ENCODE measurements at regions of chr12 and their contacts with region 1.

Region 1: GRCh38 chr12:10190558-10191388 is 11.9 kb downstream of the TMEM52B start:
- DNase-seq: peak; percentile 86
- H3K4me3 ChIP-seq: no peak overlapping the region
- H3K27ac ChIP-seq: no peak overlapping the region
- H3K4me1 ChIP-seq: peaks cover 42% of the 10 kb centered on the region
- CTCF ChIP-seq: peak; percentile 93

Region 2: DNA sequence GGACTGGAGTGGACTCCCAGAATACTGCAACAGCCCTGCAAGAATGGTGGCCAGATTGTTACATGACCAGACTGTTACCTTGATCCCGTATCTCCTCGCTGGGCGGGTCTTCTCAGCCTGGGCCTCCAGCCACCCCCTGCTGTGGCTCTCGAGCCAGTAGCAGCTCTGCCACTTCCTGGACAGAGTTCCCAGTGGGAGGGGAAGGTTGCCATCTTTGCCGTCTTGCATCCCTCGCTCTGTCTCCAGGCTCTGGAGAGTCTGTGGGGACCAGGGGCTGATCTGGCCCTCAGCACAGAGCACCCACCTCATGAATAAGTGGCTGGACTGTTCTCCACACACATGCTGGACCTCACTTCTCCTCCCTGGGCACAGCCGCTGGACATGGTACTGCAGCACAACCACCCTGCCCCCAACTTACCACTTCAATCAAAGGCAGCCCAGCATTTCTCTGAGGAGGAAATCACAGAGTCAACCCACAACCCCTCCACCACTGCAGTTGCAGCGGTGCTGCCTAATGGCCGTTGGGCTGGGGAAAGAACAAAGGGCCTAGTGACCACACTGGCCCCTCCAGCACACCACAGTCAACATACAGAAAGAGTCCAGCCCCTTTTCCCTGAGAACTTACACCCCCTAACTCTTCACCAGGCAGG is 370.4 kb before region 1 on chr12:
- CTCF ChIA-PET with region 1: no interaction called
- POLR2A ChIA-PET with region 1: no interaction called
- intact Hi-C with region 1: no loop called
- DNase-seq: no peak
- H3K4me3 ChIP-seq: no peak overlapping the region
- H3K27ac ChIP-seq: no peak overlapping the region
- H3K4me1 ChIP-seq: no peaks in the 10 kb centered on the region
- CTCF ChIP-seq: no peak

Region 3: DNA sequence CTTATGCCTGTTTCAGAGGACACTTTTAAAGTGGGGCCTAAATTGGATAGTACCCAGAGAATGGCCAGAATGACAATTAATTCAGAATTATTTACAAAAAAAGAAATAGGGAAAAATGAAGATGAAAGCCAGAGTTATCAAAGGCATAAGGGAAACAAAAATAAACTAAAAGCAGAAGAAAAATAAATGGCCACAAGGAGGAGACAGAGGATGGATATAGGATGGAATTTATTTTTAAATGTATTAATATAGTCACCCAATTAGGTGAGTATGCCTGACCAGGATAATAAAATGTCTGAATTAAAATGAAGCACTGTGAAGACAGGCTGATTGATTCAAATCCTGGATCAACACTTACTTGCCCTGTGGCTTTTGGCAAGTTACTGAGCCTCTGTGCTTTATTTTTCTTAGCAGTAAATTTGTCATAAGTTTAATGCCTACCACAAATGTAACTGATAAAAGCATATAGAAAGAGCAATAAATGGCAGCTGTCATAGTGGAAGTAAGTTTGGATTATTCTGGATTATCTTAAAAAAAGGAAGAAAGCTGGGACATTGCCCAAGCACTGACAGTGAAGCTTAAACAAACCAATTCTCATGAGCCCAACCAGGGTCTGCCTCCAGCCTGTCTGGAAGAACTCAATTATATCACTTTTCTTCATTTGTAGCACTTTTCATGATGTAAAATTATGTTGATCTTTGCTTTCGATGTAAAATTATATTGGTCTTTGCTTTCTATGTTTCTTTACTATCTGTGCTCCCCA is 156.8 kb before region 1 on chr12:
- CTCF ChIA-PET with region 1: no interaction called
- POLR2A ChIA-PET with region 1: no interaction called
- intact Hi-C with region 1: loop called (anchors 1 kb)
- DNase-seq: peak; percentile 9
- H3K4me3 ChIP-seq: no peak overlapping the region
- H3K27ac ChIP-seq: no peak overlapping the region
- H3K4me1 ChIP-seq: no peaks in the 10 kb centered on the region
- CTCF ChIP-seq: peak; percentile 81

Region 4: DNA sequence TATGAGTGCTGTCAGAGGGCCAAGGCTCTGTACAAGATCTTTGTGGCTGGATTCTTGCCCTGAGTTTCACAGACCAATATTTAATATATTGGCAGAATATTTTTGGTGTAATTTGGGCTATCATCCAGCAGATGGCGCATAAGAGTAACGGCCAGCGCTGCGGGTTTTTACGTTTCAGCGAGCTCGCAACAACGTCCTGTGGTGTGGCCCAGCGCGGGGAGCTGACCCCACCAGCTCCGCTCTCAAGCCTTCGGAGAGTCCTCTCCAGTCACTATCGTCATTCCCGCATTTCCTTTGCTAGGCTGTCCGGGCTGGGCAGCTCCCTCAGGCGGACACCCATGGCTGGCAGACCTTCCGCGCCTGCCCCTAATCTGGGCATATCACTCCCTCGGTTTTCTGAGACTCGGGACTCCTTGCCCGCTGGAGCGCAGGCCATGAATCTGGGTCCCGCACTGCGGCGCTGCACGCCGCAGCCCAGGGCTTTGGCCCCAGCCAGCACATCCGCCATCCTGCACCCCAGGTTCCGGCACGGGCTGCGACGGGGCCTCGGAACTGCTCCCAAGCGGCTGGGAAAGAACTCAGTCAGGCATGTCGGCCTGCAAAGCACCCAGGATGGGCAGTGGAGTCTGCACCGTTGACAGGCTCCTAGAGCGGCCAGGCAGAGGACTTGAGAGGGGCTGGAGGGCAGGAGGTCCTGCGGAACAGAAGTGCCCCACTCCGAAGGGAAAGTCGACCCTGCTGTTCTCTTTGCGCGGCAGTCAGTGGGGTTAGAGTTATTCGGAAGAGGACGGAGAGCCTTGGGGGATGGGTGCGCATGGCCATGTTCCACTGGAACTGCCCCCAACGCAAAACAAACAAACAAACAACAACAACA is 37.3 kb before region 1 on chr12:
- CTCF ChIA-PET with region 1: interaction called, 5 read pairs
- POLR2A ChIA-PET with region 1: interaction called, 13 read pairs
- intact Hi-C with region 1: loop called (anchors 1 kb)
- DNase-seq: peak; percentile 78
- H3K4me3 ChIP-seq: peak overlapping the region; percentile 70
- H3K27ac ChIP-seq: no peak overlapping the region
- H3K4me1 ChIP-seq: peaks cover 15% of the 10 kb centered on the region
- CTCF ChIP-seq: peak; percentile 95

Region 5: DNA sequence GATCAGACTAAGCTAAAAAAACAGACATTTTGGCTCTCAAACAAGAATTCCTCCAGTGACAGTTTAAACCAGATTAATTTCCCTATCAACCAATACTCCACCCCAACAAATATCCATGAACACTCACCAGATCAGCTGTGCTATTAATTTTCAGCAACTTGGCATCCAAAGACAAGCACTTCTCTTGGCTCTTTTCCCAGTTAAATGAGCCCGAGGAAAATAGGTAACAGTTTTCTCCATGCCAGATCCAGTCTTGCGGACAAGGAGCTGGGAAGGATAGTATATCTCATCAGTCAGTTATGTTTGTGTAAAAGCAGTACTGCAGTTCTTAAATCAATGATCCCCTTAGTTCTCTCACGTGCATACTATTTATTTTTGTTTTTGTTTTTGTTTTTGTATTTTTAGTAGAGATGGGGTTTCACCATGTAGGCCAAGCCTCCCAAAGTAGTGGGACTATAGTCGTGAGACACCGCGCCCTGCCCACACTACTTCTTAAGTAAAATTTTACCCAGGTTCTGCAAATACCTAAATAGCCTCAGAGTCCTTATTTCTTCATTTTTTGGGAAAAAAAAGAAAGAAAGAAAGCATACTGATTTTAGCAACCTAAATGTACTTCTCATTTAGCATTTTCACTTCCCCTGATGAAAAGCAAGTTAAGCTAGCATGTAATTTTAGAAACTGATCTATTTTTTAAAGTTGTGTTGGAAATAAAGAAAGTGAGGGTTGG is 30.0 kb before region 1 on chr12:
- CTCF ChIA-PET with region 1: no interaction called
- POLR2A ChIA-PET with region 1: interaction called, 13 read pairs
- intact Hi-C with region 1: no loop called
- DNase-seq: no peak
- H3K4me3 ChIP-seq: no peak overlapping the region
- H3K27ac ChIP-seq: no peak overlapping the region
- H3K4me1 ChIP-seq: peaks cover 40% of the 10 kb centered on the region
- CTCF ChIP-seq: no peak